Keratinocyte (primary cell): ENCODE measurements at regions of chr5 and their contacts with region 1.

Region 1: DNA sequence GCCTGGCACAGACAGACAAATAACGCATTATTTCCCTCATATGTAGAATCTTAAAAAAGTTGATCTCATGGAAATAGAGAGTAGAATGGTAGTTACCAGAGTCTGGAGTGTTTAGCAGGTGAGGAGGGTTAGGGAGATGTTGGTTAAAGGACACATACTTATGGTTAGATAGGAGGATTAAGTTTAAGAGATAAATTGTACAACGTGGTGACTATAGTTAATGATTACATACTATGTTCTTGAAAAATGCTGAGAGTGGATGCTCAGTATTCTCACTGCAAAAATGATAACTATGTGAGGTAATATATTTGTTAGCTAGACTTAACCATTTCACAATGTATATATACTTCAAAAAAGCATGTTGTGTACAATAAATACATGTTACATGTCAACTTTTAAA is 38.0 kb downstream of the CERT1 start:
- DNase-seq: no peak
- H3K4me3 ChIP-seq: no peak overlapping the region
- H3K27ac ChIP-seq: no peak overlapping the region
- H3K4me1 ChIP-seq: no peaks in the 10 kb centered on the region
- H3K27me3 ChIP-seq: no peaks in the 10 kb centered on the region
- CTCF ChIP-seq: no peak

Region 2: GRCh38 chr5:75142566-75143136 is 330.8 kb before region 1 on chr5:
- dilution Hi-C with region 1: no loop called
- DNase-seq: no peak
- H3K4me3 ChIP-seq: no peak overlapping the region
- H3K27ac ChIP-seq: no peak overlapping the region
- H3K4me1 ChIP-seq: no peaks in the 10 kb centered on the region
- H3K27me3 ChIP-seq: no peaks in the 10 kb centered on the region
- CTCF ChIP-seq: no peak

Region 3: GRCh38 chr5:75412111-75412990 is 61.1 kb before region 1 on chr5:
- dilution Hi-C with region 1: loop called (anchors 10 kb)
- DNase-seq: no peak
- H3K4me3 ChIP-seq: no peak overlapping the region
- H3K27ac ChIP-seq: peak overlapping the region; percentile 9
- H3K4me1 ChIP-seq: peaks cover 4% of the 10 kb centered on the region
- H3K27me3 ChIP-seq: no peaks in the 10 kb centered on the region
- CTCF ChIP-seq: no peak